ENCODE measurements at regions of chr2 and their contacts with region 1.

Region 1: GRCh38 chr2:64330281-64331113 is 123.5 kb upstream of the LGALSL start:
- DNase-seq: peak; percentile 93
- H3K4me3 ChIP-seq: peak overlapping the region; percentile 17 to 36 (median 28)
- H3K27ac ChIP-seq: peak overlapping the region; percentile 60 to 72 (median 65)
- H3K4me1 ChIP-seq: peaks cover 24 to 40% (median 38%) of the 10 kb centered on the region in 4 donors
- H3K27me3 ChIP-seq: no peaks in the 10 kb centered on the region
- CTCF ChIP-seq: peak; percentile 91 to 94 (median 93)
- EP300 ChIP-seq: no peak
- POLR2A ChIP-seq: no peak

Region 2: DNA sequence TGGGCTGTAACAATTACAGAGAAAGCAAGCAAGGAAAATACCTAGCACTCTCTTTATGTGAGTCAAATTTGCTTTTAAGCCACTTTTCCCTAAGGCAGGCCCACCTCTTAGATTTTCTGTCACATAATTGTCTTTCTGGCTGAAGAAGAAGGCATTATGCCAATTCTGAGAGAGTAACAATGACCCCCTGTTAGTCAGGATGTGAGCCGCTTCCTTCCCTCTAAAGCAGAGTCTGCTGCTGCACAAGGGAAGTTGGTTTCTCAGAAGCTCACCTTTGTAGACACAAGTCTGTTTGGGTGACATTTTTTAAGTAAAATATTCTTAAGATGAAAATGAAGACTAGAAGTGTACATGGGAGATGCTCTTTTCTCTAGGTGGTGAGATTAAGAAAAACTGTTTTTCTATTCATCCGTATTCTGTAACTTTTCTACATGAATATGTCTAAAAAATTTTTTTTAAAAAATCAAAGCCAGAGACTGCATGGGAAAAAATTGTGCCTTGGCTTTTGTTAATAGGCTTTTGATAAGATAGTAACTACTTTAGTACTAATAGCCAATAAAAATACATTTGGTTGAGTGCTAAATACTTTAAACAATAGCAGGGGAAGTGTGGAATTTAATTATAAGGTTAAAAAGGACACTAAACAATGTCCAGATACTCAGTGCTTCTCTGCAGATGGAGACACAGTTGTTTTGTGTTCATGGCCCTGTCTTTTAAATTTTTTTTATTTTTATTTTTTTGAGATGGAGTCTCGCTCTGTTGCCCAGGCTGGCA is 277.8 kb before region 1 on chr2:
- intact Hi-C with region 1: loop called (anchors 1 kb)
- DNase-seq: no peak
- H3K4me3 ChIP-seq: no peak overlapping the region
- H3K27ac ChIP-seq: peak overlapping the region in 3 of 4 donors; percentile 13 to 42 (median 16)
- H3K4me1 ChIP-seq: peaks cover 0 to 7% (median 5%) of the 10 kb centered on the region in 4 donors
- H3K27me3 ChIP-seq: no peaks in the 10 kb centered on the region
- CTCF ChIP-seq: no peak
- EP300 ChIP-seq: no peak
- POLR2A ChIP-seq: no peak

Region 3: GRCh38 chr2:64085936-64086335 is 244.6 kb before region 1 on chr2:
- intact Hi-C with region 1: no loop called
- DNase-seq: no peak
- H3K4me3 ChIP-seq: no peak overlapping the region
- H3K27ac ChIP-seq: no peak overlapping the region
- H3K4me1 ChIP-seq: no peaks in the 10 kb centered on the region
- H3K27me3 ChIP-seq: no peaks in the 10 kb centered on the region
- CTCF ChIP-seq: no peak
- EP300 ChIP-seq: no peak
- POLR2A ChIP-seq: no peak

Region 4: DNA sequence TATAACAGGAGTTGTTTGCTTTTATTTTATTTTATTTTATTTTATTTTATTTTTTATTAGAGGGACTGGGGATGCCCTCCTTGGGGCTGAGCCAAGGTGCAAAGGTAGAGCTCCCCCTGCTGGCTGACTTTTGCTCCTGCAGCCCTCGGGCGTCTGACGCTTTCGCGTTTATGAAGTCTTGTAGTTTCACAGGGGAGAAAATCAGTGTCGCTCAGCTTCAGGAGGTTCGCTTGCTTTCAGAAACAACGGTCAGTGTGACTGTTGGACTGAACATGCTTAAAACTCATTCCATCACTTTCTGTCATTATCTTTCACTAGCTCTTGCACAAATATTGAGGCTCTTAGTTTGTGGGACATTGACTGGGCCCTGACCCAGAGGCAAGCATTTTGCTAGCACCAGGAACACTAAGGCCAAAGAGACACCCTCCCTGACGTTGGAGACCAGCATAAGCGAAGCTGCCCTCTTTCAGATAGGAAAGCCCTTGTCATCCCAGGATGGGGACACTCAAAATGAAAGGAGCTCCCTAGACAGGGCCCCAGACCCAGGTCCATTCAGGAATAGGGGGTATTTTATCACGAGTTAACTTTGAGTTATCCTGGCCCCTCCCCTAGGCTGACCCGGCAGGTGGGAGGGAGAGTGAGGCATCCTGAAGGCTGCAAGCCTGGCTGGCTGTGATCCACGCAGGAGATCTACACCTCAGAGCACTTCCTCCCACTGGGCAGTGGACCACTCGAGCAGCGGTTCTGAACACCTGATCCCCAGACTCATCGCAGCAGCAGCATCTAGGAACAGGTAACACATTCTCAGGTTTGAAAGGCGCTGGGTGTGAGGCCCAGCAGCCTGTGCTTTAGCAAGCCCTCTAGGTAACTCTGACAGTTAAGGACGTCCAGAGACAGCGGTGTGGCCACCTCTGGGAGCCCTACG is 157.8 kb after region 1 on chr2:
- intact Hi-C with region 1: loop called (anchors 1 kb)
- DNase-seq: no peak
- H3K4me3 ChIP-seq: no peak overlapping the region
- H3K27ac ChIP-seq: no peak overlapping the region
- H3K4me1 ChIP-seq: peaks cover 8 to 30% (median 24%) of the 10 kb centered on the region in 4 donors
- H3K27me3 ChIP-seq: no peaks in the 10 kb centered on the region
- CTCF ChIP-seq: peak; percentile 93 to 97 (median 94)
- EP300 ChIP-seq: no peak
- POLR2A ChIP-seq: no peak

Region 5: GRCh38 chr2:64562148-64562784 is 231.8 kb after region 1 on chr2:
- intact Hi-C with region 1: loop called (anchors 10 kb)
- DNase-seq: no peak
- H3K4me3 ChIP-seq: no peak overlapping the region
- H3K27ac ChIP-seq: no peak overlapping the region
- H3K4me1 ChIP-seq: peaks cover 0 to 4% (median 0%) of the 10 kb centered on the region in 4 donors
- H3K27me3 ChIP-seq: no peaks in the 10 kb centered on the region
- CTCF ChIP-seq: peak; percentile 29 to 44 (median 39)
- EP300 ChIP-seq: no peak
- POLR2A ChIP-seq: no peak

Region 6: GRCh38 chr2:64873472-64873924 is 543.0 kb after region 1 on chr2:
- intact Hi-C with region 1: loop called (anchors 10 kb)
- DNase-seq: peak; percentile 94
- H3K4me3 ChIP-seq: peak overlapping the region; percentile 12 to 47 (median 32)
- H3K27ac ChIP-seq: no peak overlapping the region
- H3K4me1 ChIP-seq: peaks cover 16 to 19% (median 18%) of the 10 kb centered on the region in 4 donors
- H3K27me3 ChIP-seq: no peaks in the 10 kb centered on the region
- CTCF ChIP-seq: peak in 2 of 3 experiments; percentile 94 to 95
- EP300 ChIP-seq: no peak
- POLR2A ChIP-seq: no peak